ENCODE measurements at regions of chr16 and their contacts with region 1.

Region 1: GRCh38 chr16:80824718-80825364 is 20.4 kb upstream of the CDYL2 start:
- DNase-seq: peak; percentile 7
- ATAC-seq: peak; percentile 59; the same call in 2 of the 3 replicates
- H3K4me3 ChIP-seq: no peak overlapping the region
- H3K27ac ChIP-seq: no peak overlapping the region
- H3K4me1 ChIP-seq: no peaks in the 10 kb centered on the region
- H3K27me3 ChIP-seq: no peaks in the 10 kb centered on the region
- CTCF ChIP-seq: peak; percentile 69 to 75 (median 74)
- EP300 ChIP-seq: no peak
- POLR2A ChIP-seq: no peak
- RAD21 ChIP-seq: peak; percentile 77

Region 2: GRCh38 chr16:80540516-80541272 is 284.1 kb before region 1 on chr16 and contains the start of gene DYNLRB2:
- CTCF ChIA-PET with region 1: no interaction called
- POLR2A ChIA-PET with region 1: no interaction called
- RAD21 ChIA-PET with region 1: no interaction called
- SMC1A ChIA-PET with region 1: no interaction called
- in situ Hi-C with region 1: loop called (anchors 25 kb)
- intact Hi-C with region 1: no loop called
- DNase-seq: peak; percentile 71
- ATAC-seq: peak; percentile 92
- H3K4me3 ChIP-seq: peak within 1 kb of the TSS; percentile 61
- H3K27ac ChIP-seq: peak within 1 kb of the TSS; percentile 39
- H3K4me1 ChIP-seq: no peaks in the 10 kb centered on the region
- H3K27me3 ChIP-seq: no peaks in the 10 kb centered on the region
- CTCF ChIP-seq: no peak
- EP300 ChIP-seq: no peak
- POLR2A ChIP-seq: peak; percentile 82
- RAD21 ChIP-seq: no peak
- polyA plus RNA-seq, gene DYNLRB2: 0.33 to 0.52 TPM

Region 3: GRCh38 chr16:80852261-80852872 is 27.5 kb after region 1 on chr16:
- CTCF ChIA-PET with region 1: interaction called, 12 read pairs
- POLR2A ChIA-PET with region 1: no interaction called
- RAD21 ChIA-PET with region 1: interaction called, 4 read pairs
- SMC1A ChIA-PET with region 1: interaction called, 4 read pairs
- in situ Hi-C with region 1: no loop called
- intact Hi-C with region 1: no loop called
- DNase-seq: no peak
- ATAC-seq: peak; percentile 52
- H3K4me3 ChIP-seq: no peak overlapping the region
- H3K27ac ChIP-seq: no peak overlapping the region
- H3K4me1 ChIP-seq: no peaks in the 10 kb centered on the region
- H3K27me3 ChIP-seq: no peaks in the 10 kb centered on the region
- CTCF ChIP-seq: peak; percentile 33 to 62 (median 43)
- EP300 ChIP-seq: no peak
- POLR2A ChIP-seq: no peak
- RAD21 ChIP-seq: peak; percentile 72

Measured in GM12878 (cell line).